ENCODE measurements at regions of chr18 and their contacts with region 1.

Region 1: DNA sequence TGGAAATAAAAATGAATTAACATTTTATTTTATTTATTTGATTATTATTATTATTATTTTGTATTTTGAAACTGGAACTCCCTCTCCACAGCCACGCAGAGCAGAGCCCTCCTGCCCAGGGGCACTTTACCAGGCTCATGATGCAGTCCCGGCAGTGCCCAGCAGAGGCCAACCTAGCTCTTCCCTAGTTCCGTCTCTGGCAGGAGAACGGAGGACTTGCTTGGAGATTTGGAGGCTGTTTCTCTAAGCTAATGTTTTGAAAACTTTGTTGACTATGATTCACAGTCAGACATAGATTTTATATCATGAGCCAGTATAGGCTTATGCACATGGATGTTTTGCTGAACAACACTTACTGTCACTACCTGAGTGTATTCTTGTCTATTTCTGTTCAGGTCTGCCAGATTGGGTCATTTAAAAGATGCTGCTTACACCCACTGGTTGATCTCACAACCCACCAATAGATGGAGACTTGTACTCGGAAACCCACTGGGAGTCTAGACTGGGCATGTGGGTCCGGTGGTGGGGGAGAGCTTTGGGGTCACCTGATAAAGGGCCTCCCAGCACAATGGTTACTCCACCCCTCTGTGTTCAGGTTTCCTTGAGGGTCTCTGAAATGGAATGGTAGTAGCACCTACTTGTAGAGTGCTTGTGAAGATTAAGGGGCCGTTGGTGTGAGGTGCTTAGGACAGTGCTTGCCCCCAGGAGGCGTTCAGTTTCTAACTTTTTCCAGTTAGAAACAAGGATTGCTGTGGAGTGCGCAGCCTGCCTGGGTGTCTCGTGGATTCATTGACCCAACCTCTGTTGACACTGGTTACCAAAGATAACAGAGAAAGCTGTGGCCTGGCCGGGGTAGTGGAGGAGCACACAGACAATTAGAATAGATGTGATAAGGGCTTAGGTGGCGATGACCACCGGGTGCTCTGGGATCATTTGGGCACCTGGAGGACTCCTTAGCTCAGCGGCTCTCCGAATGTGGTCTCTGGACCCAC is 177.3 kb downstream of the HAUS1 start:
- DNase-seq: peak; percentile 43 to 60
- ATAC-seq: peak; percentile 89 to 95
- H3K4me3 ChIP-seq: no peak overlapping the region
- H3K27ac ChIP-seq: no peak overlapping the region
- H3K4me1 ChIP-seq: no peaks in the 10 kb centered on the region
- CTCF ChIP-seq: peak; percentile 68
- EP300 ChIP-seq: no peak
- POLR2A ChIP-seq: no peak
- RAD21 ChIP-seq: peak; percentile 78 to 81

Region 2: DNA sequence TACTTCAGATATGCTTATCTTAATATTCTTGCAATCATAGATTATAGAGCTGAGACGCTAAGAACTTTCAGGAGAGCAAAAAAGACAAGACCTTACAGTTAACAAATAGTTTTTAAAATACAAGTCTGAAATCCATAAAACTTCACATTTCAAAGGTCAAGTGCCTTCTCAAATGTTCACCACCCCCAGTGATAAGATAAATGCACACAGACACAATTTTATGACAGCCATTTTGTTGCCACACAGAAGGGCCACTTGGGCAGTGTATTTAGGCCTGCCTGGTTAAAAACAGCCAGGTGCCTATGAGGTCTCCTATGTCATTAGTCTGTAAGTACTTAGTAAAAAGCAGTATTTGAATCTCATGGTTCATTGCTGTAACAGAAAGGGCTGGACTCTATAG is 201.3 kb before region 1 on chr18:
- CTCF ChIA-PET with region 1: no interaction called
- POLR2A ChIA-PET with region 1: no interaction called
- DNase-seq: no peak
- ATAC-seq: no peak
- H3K4me3 ChIP-seq: no peak overlapping the region
- H3K27ac ChIP-seq: no peak overlapping the region
- H3K4me1 ChIP-seq: no peaks in the 10 kb centered on the region
- CTCF ChIP-seq: no peak
- EP300 ChIP-seq: no peak
- POLR2A ChIP-seq: no peak
- RAD21 ChIP-seq: no peak

Region 3: DNA sequence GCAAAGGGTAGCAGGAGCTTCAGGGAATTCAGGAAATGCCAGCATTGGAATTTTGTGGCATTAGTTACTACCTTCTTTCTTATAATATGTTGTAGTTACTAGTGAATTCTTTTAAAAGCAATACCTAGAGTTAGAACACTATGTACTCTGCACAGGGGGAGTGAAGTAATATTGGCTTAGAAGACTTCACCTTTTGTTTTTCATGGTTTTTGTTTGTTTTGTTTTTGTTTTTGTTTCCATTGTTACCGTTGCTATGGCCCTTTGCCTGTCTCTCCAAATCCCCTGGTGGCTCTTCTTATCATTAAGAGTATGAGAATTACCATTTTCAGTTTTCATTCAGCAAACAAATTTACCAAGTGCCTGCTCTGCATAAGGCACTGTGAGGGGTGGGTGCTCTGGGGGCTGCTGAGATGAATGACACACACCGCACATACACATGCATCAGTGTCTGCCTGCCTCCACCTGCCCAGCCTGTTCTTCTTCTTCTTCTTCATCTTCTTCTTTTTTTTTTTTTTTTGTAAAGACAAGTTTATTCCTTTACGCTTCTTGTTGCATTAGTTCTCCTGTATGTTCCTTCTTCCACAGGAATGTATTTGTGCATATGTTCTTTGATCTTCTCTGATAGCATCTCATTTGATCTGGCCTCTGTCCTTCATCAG is 17.1 kb before region 1 on chr18:
- CTCF ChIA-PET with region 1: interaction called, 13 read pairs
- POLR2A ChIA-PET with region 1: no interaction called
- DNase-seq: peak; percentile 2 to 42
- ATAC-seq: peak; percentile 24 to 47; a peak in 3 of 6 replicates
- H3K4me3 ChIP-seq: no peak overlapping the region
- H3K27ac ChIP-seq: no peak overlapping the region
- H3K4me1 ChIP-seq: no peaks in the 10 kb centered on the region
- CTCF ChIP-seq: no peak
- EP300 ChIP-seq: no peak
- POLR2A ChIP-seq: no peak
- RAD21 ChIP-seq: no peak

Region 4: GRCh38 chr18:46315187-46315586 is 33.7 kb after region 1 on chr18:
- CTCF ChIA-PET with region 1: interaction called, 10 read pairs
- POLR2A ChIA-PET with region 1: no interaction called
- DNase-seq: no peak
- ATAC-seq: no peak
- H3K4me3 ChIP-seq: no peak overlapping the region
- H3K27ac ChIP-seq: no peak overlapping the region
- H3K4me1 ChIP-seq: no peaks in the 10 kb centered on the region
- CTCF ChIP-seq: no peak
- EP300 ChIP-seq: no peak
- POLR2A ChIP-seq: no peak
- RAD21 ChIP-seq: no peak

Region 5: GRCh38 chr18:46555724-46556123 is 274.2 kb after region 1 on chr18:
- CTCF ChIA-PET with region 1: interaction called, 10 read pairs
- POLR2A ChIA-PET with region 1: no interaction called
- DNase-seq: peak; percentile 40 to 49
- ATAC-seq: peak; percentile 76 to 91; a peak in 5 of 6 replicates
- H3K4me3 ChIP-seq: no peak overlapping the region
- H3K27ac ChIP-seq: no peak overlapping the region
- H3K4me1 ChIP-seq: no peaks in the 10 kb centered on the region
- CTCF ChIP-seq: peak; percentile 32; the same call in 2 of the 3 replicates
- EP300 ChIP-seq: no peak
- POLR2A ChIP-seq: no peak
- RAD21 ChIP-seq: peak; percentile 24 to 54; a peak in 2 of 5 replicates

Region 6: GRCh38 chr18:46660955-46661749 is 379.7 kb after region 1 on chr18:
- CTCF ChIA-PET with region 1: interaction called, 109 read pairs
- POLR2A ChIA-PET with region 1: no interaction called
- DNase-seq: peak in 1 of 2 experiments; percentile 8
- ATAC-seq: no peak; a peak in 1 of 6 replicates
- H3K4me3 ChIP-seq: no peak overlapping the region
- H3K27ac ChIP-seq: no peak overlapping the region
- H3K4me1 ChIP-seq: no peaks in the 10 kb centered on the region
- CTCF ChIP-seq: no peak
- EP300 ChIP-seq: no peak
- POLR2A ChIP-seq: no peak
- RAD21 ChIP-seq: no peak

Measured in A549 (cell line).